ENCODE measurements at regions of chr7 and their contacts with region 1.

Region 1: DNA sequence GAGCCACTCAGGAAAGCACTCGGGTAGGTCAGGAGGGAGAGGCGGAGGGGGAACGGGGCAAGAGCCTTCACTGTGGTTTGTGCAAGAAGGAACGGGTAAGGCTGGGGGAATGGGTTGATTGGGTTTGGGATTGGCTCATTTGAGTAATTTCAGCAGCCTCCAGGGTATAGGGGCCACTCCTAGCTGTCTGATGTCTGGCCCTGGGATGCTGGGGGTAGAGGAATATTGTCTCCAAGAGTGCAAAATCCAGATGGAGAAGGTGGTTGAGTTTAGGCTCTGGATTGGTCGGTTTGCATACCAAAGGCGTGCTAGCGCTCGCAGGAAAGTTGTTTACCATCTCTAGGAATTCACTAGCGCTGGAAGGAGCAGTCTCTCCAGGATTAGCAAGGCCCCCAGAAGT is 47.2 kb downstream of the MYL10 start:
- DNase-seq: no peak
- H3K4me3 ChIP-seq: no peak overlapping the region
- H3K27ac ChIP-seq: no peak overlapping the region
- H3K4me1 ChIP-seq: no peaks in the 10 kb centered on the region
- H3K27me3 ChIP-seq: peaks cover 0 to 5% of the 10 kb centered on the region in 2 donors
- CTCF ChIP-seq: no peak

Region 2: DNA sequence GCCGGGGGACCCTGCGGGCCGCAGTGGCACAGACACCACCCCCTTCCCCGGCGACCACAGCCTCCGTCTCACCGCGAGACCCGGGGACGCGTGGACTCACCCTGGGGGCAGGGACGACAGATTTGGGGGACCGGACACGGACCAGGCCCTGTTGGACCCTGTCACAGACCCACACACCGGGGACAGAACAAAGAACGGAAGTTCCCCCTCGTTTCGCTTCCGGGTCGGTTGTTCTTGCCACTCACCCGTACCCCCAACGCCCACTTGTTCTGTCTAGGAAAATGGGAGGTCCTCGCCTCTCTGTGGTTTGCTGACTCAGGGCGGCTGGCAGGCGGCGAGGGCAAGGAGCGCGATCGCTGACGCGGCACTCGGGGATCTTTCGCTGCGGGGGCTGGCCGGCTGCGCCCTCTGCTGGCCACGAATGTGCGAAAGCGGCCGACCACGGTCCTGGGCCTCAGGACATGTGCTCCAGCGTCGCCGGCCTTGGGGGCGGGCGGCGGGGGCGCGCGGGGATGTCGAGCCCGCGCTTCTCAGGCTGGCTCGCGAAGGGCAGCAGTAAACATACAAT is 1500.3 kb before region 1 on chr7 and contains the start of gene ZNF3:
- intact Hi-C with region 1: no loop called
- DNase-seq: peak; percentile 98 to 99
- H3K4me3 ChIP-seq: peak within 1 kb of the TSS; percentile 95 to 98
- H3K27ac ChIP-seq: peak within 1 kb of the TSS; percentile 82 to 88
- H3K4me1 ChIP-seq: peaks cover 5 to 40% (median 25%) of the 10 kb centered on the region in 4 donors
- H3K27me3 ChIP-seq: no peaks in the 10 kb centered on the region
- CTCF ChIP-seq: peak; percentile 91 to 93

Region 3: DNA sequence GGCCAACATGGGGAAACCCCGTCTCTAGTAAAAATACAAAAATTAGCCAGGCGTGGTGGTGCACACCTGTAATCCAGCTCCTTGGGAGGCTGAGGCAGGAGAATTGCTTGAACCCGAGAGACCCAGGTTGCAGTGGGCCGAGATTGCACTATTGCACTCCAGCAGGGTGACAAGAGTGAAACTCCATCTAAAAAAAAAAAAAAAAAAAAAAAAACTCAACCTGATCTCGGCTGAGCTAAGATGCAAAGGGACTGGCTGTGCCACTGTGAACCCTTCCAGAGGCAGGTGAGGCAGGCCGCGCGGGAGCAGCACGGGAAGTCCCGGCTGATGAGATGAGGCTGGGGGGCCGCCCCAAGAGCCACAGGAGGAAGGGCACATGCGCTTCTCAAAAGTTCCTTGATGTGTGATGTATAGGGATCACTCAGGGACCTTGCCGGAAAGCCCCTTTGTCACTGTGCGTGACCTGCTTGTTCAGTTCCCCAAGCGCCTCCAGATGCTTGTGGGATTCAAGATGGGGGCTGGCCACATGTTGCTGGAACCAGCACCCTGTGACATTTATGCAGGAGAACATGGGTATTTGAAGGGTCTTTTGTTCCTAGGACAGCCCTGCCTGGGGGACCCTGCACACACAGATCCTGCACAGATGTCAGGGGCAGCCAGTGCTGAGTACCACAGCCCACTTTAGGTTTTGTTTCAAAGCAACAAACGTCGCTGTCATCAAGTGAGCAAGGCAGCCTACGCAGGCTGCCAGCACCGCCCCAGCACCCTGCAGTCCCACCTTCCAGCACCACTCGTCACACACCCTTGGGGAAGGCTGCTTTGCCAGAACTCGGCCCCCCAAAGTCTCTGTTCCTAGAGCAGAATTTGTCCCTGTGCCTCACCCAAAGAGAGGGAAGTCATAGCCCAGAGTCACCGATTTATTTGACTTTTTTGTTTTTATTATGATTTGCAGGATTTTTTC is 630.0 kb after region 1 on chr7:
- intact Hi-C with region 1: loop called (anchors 5 kb)
- DNase-seq: no peak
- H3K4me3 ChIP-seq: no peak overlapping the region
- H3K27ac ChIP-seq: no peak overlapping the region
- H3K4me1 ChIP-seq: no peaks in the 10 kb centered on the region
- H3K27me3 ChIP-seq: no peaks in the 10 kb centered on the region
- CTCF ChIP-seq: no peak

Measured in tibial artery (tissue), 4 donors.